HCT116 (cell line): ENCODE measurements at regions of chr9 and their contacts with region 1.

Region 1: DNA sequence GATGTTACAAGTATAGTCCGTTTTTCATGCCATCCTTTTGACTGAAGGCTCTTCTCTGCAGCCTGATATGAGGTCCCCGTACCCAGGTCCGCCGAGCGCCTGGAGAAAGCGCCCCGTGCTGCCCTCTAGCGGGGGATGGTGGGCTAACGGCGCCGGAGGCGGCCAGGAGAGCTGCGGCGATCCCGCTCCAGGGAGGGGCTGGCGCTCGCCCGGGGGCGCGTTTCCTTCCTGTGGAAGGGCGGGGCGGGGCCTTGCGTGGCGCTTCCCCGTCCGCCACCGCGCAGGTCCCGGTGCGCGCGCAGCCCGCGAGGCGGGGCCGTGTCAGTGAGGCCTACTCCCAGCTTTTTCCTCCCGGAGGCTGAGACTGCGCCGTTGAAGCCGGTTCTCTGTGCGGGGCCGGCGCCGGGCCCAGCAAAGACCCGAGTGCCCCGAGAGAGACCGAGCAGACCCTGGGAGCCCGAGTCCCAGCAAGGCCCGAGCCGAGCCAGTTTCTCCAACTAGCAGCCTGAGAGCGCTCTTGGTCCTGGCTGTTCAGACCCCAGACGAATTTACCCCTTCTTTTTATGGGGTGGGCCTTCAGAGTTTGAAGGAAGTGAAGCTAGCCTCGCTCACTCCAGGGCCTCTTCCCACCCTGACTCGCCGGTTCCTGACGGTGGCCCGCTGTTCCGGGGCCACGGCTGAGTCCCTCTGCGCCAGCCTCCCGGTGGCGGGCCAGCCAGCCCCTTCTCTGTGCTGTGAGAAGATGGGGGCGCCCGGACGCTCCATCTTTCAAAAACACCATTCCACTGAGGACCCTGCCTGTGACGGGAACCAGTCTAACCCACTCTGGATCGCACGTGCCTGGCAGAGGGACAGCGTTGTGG is 9.7 kb upstream of the PHF2 start:
- DNase-seq: peak; percentile 86
- ATAC-seq: peak; percentile 98
- H3K4me3 ChIP-seq: peak overlapping the region; percentile 67 to 70
- H3K27ac ChIP-seq: peak overlapping the region; percentile 74
- H3K4me1 ChIP-seq: peaks cover 4 to 12% of the 10 kb centered on the region in 2 experiments; a peak in 2 of 4 replicates
- H3K27me3 ChIP-seq: no peaks in the 10 kb centered on the region
- CTCF ChIP-seq: peak; percentile 74 to 93 (median 87)
- POLR2A ChIP-seq: peak; percentile 22
- RAD21 ChIP-seq: peak; percentile 80

Region 2: DNA sequence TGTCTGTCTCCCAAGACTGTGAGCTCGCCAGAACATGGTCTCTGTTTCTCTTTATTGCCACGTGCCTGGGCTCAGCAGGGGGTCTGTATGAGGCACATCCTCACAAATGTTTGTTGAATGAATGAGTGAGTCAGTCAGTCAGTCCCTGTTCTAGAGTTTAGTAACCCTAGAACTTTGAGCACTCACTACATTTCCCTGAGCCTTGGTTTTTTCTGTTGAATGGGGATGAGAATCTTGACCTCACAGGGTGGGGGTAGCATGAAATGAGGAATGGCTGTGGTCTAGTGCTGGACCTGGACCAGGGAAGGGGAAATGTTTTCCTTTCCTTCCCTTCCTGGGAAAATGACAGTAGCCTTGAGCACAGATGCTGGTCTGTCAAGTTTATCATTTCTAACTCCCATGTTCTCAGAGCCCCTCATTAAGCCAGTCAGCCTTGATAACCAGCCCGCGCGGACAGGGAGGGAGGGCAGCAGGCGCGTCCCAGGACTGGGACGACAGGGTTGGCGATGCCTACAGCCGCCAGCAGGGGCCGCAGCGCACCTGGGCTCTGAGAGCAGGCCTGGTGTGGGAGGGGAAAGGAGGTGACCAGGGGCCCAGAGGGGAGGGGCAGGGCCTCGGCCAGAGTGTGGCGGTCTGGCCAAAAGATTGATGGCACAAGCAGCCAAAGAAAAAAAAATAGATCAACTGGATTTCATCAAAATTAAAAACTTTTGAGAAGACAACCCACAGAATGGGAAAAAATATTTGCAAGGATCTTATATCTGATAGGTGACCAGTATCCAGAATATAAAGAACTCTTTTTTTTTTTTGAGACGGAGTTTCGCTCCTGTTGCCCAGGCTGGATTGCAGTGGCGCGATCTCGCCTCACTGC is 406.8 kb before region 1 on chr9:
- CTCF ChIA-PET with region 1: interaction called, 9 read pairs
- POLR2A ChIA-PET with region 1: no interaction called
- RAD21 ChIA-PET with region 1: no interaction called
- intact Hi-C with region 1: loop called (anchors 1 kb)
- DNase-seq: peak; percentile 67
- ATAC-seq: peak; percentile 100
- H3K4me3 ChIP-seq: peak overlapping the region in 1 of 2 experiments; percentile 36; a peak in 2 of 4 replicates
- H3K27ac ChIP-seq: no peak overlapping the region
- H3K4me1 ChIP-seq: peaks cover 3 to 7% of the 10 kb centered on the region in 2 experiments; a peak in 3 of 4 replicates
- H3K27me3 ChIP-seq: no peaks in the 10 kb centered on the region
- CTCF ChIP-seq: peak; percentile 98 to 99 (median 99)
- POLR2A ChIP-seq: no peak
- RAD21 ChIP-seq: peak; percentile 100

Region 3: GRCh38 chr9:93268551-93269314 is 297.9 kb before region 1 on chr9:
- CTCF ChIA-PET with region 1: no interaction called
- POLR2A ChIA-PET with region 1: no interaction called
- RAD21 ChIA-PET with region 1: no interaction called
- intact Hi-C with region 1: no loop called
- DNase-seq: no peak
- ATAC-seq: no peak
- H3K4me3 ChIP-seq: no peak overlapping the region
- H3K27ac ChIP-seq: no peak overlapping the region
- H3K4me1 ChIP-seq: no peaks in the 10 kb centered on the region
- H3K27me3 ChIP-seq: no peaks in the 10 kb centered on the region
- CTCF ChIP-seq: no peak
- POLR2A ChIP-seq: no peak
- RAD21 ChIP-seq: no peak

Region 4: GRCh38 chr9:93552923-93553322 is 13.7 kb before region 1 on chr9:
- CTCF ChIA-PET with region 1: interaction called, 12 read pairs
- POLR2A ChIA-PET with region 1: interaction called, 8 read pairs
- RAD21 ChIA-PET with region 1: no interaction called
- intact Hi-C with region 1: no loop called
- DNase-seq: no peak
- ATAC-seq: no peak
- H3K4me3 ChIP-seq: no peak overlapping the region
- H3K27ac ChIP-seq: no peak overlapping the region
- H3K4me1 ChIP-seq: no peaks in the 10 kb centered on the region
- H3K27me3 ChIP-seq: no peaks in the 10 kb centered on the region
- CTCF ChIP-seq: no peak
- POLR2A ChIP-seq: no peak
- RAD21 ChIP-seq: no peak

Region 5: DNA sequence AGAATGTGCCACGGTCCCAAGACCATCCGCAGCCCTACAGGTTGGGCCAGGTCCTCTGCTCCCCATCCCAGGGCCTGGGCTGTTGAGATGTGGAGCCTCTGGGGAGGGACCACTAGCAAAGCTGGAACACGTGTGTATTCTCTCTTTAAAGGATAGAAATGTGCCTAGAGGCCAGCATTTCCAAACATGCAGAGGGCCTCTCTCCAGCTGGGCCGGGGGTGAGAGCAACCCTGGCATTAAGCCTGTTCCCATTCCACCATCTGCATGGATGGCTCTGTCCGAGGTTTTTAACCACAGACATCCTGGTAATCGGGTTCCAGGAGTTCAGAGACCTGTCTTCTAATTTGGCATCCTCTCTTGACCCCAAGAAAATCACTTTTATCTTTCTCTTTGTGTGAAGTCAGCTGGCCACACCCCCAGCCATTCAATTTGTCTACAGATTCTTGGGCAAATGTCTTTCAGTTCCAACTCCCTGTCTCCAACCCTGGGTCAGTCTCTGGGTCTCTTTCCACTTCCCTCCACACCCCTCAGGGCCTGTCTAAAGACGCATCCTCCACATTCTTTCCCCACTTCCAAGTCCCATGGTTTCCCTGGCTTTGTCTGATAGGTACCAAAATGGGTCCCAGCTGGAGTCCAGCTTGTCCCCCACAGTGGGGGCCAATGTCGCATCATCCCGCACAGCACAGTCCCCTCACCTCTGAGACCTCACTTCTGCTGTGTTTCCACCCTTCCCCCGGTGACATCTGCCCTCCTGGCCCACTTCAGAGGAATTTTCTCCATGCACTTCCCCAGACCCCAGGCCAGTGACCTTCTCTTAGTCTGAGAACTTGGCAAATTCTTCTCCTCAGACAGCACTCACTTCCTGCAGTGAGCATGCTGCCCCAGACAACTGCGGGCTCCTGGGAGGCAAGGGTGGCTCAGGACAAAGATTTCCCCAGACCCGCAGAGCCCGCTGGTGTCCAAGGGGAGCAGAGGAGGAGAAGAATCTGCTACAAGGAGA is 574.5 kb after region 1 on chr9:
- CTCF ChIA-PET with region 1: no interaction called
- POLR2A ChIA-PET with region 1: no interaction called
- RAD21 ChIA-PET with region 1: no interaction called
- intact Hi-C with region 1: no loop called
- DNase-seq: no peak
- ATAC-seq: no peak; the same call in 1 of the 2 replicates
- H3K4me3 ChIP-seq: no peak overlapping the region
- H3K27ac ChIP-seq: peak overlapping the region; percentile 57
- H3K4me1 ChIP-seq: peaks cover 19 to 25% of the 10 kb centered on the region in 2 experiments
- H3K27me3 ChIP-seq: no peaks in the 10 kb centered on the region
- CTCF ChIP-seq: no peak
- POLR2A ChIP-seq: no peak
- RAD21 ChIP-seq: no peak